ENCODE measurements at regions of chr4 and their contacts with region 1.

Region 1: DNA sequence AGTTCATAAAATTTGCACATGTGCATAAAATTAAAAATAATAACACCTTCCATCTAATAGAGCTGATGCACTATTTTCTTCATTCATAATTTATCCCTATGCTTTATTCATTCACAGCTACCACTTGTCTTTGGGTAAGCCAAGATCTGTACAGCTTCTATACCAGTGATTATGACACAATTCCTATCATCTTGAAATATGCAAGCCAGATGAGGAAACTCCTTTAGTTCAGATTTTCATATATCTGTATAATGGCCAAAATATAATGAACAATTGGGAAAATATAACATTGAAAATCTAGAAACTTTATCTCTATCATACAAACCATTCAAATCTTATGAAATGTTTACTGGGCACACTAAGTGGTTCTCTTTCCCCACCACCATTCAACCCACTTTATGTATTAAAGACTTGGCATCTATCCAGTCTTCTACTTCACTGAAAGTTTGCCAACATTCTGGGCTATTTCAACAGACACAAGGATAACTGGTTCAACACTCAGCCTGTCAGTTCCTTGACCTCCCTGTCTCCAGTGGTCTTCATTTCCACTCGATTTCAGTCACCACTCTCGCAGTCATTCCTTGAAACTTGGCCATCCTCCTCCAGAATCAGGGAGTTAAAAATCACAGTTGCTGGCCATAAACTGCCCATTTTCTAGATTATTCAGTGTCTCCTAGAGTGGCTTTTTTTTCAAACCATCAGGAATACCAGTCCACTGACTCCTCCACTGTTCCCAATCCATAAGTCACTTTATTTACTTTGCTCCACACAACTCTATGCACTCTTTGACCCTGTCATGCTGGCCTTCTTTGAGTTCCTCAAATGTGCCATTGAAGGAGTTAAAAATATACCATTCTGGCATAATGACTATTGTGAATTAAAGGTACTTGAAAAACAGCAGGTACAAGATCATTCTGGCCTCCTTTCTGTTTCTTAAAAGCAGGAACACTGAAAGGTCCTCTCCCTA is 85.5 kb downstream of the CAMK2D start:
- DNase-seq: no peak
- ATAC-seq: no peak
- H3K4me3 ChIP-seq: no peak overlapping the region
- H3K27ac ChIP-seq: peak overlapping the region in 1 of 2 donors; percentile 54
- H3K4me1 ChIP-seq: peaks cover 0 to 3% of the 10 kb centered on the region in 2 donors
- H3K27me3 ChIP-seq: no peaks in the 10 kb centered on the region

Region 2: DNA sequence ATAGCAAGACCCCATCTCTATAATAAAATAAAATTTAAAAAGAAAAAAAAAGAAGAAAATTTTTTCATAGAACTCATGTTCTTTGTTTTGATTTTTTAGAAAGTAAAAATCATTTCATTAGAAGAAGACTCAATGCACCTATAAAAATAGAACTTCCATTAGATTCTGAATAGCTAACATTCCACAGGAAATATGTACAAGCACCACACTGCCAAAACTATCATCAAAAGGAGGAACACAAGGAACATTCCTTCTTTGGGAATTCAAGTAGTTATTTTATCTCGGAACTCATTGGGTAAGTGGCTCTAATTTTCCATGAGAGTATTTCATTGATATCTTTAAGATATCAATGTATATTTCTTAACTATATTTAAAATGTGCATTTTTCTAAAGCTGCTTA is 72.1 kb before region 1 on chr4:
- intact Hi-C with region 1: no loop called
- DNase-seq: no peak
- ATAC-seq: no peak
- H3K4me3 ChIP-seq: no peak overlapping the region
- H3K27ac ChIP-seq: no peak overlapping the region
- H3K4me1 ChIP-seq: peaks cover 0 to 1% of the 10 kb centered on the region in 2 donors
- H3K27me3 ChIP-seq: no peaks in the 10 kb centered on the region

Region 3: DNA sequence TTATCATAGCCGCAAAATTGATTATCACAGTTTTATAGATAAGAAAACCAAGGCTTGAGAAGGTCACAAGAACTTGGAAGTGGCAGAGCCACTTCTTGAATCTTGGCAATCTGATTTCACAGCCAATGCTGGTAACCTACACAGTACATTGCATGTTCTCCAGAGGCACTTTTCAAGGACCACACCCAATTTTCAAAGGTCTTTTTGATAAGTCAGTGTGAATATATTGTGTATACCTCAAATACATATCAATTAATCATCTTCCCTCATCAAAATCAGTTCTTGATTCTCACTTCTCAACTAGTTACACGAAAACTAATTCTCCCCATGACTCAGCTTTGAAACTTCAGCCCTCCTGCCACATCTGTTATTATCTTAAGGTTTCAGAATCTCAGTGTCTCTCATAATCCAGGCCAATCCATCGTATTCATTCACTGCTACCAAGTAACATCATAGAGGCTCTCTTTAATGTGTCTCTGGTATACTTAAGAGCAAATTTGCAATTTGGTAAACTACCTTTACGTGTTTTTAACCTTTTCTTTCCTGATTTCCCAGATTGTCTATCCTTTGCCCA is 68.7 kb after region 1 on chr4:
- intact Hi-C with region 1: loop called in 1 of 2 experiments (anchors 5 kb)
- DNase-seq: no peak
- ATAC-seq: no peak
- H3K4me3 ChIP-seq: no peak overlapping the region
- H3K27ac ChIP-seq: no peak overlapping the region
- H3K4me1 ChIP-seq: peaks cover 0 to 2% of the 10 kb centered on the region in 2 donors
- H3K27me3 ChIP-seq: no peaks in the 10 kb centered on the region